Activated CD4-positive, alpha-beta memory T cell treated with anti-CD3 and anti-CD28 coated beads for 36 hours (primary cell): ENCODE measurements at regions of chr1 and their contacts with region 1.

Region 1: DNA sequence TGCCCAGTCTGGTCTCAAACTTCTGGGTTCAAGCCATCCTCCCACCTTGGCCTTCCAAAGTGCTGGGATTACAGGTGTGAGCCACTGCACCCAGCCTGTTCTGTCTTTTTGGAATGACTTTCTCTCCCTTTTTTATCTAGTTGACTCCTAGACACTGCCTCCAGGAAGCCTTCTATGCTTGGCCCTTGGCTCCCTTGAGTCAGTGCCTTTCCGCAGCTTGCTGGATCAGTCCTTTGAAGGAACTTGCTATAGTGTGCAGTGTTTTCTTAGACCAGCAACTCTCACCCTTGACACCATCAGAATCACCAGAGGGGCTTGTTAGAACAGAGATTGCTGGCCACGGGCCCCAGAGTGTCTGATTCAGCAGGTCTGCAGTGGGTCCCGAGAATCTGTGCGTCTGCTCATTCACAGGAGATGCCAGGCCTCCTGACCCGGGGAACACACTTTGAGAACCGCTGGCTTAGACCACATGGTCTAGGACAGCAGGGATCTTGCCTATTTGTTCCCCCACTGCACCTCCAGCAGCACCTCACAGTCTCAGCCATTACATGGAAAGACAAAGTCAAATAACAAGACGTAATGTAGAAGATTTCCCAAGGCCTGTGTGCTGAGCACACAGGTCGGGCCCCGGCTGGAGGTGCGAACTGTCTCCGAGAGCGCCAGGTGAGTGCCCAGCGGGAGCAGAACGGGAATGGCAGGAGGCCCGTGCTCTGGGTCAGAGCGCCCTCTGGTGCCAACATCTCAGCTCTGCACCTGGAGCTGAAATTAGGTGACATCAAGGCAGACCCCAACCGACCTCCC is 27.4 kb upstream of the CTPS1 start:
- DNase-seq: peak; percentile 73
- H3K4me3 Mint-ChIP-seq: no peak overlapping the region
- H3K27ac Mint-ChIP-seq: no peak overlapping the region
- H3K4me1 Mint-ChIP-seq: peaks cover 8% of the 10 kb centered on the region
- H3K27me3 Mint-ChIP-seq: peaks cover 13% of the 10 kb centered on the region

Region 2: GRCh38 chr1:40612345-40612831 is 339.8 kb before region 1 on chr1:
- CTCF ChIA-PET with region 1: interaction called, 4 read pairs
- POLR2A ChIA-PET with region 1: no interaction called
- intact Hi-C with region 1: loop called (anchors 1 kb)
- DNase-seq: peak; percentile 79
- H3K4me3 Mint-ChIP-seq: no peak overlapping the region
- H3K27ac Mint-ChIP-seq: no peak overlapping the region
- H3K4me1 Mint-ChIP-seq: no peaks in the 10 kb centered on the region
- H3K27me3 Mint-ChIP-seq: no peaks in the 10 kb centered on the region

Region 3: GRCh38 chr1:40774266-40774998 is 177.7 kb before region 1 on chr1:
- CTCF ChIA-PET with region 1: interaction called, 123 read pairs
- POLR2A ChIA-PET with region 1: interaction called, 3 read pairs
- intact Hi-C with region 1: loop called (anchors 1 kb)
- DNase-seq: peak; percentile 74
- H3K4me3 Mint-ChIP-seq: no peak overlapping the region
- H3K27ac Mint-ChIP-seq: no peak overlapping the region
- H3K4me1 Mint-ChIP-seq: no peaks in the 10 kb centered on the region
- H3K27me3 Mint-ChIP-seq: no peaks in the 10 kb centered on the region

Region 4: DNA sequence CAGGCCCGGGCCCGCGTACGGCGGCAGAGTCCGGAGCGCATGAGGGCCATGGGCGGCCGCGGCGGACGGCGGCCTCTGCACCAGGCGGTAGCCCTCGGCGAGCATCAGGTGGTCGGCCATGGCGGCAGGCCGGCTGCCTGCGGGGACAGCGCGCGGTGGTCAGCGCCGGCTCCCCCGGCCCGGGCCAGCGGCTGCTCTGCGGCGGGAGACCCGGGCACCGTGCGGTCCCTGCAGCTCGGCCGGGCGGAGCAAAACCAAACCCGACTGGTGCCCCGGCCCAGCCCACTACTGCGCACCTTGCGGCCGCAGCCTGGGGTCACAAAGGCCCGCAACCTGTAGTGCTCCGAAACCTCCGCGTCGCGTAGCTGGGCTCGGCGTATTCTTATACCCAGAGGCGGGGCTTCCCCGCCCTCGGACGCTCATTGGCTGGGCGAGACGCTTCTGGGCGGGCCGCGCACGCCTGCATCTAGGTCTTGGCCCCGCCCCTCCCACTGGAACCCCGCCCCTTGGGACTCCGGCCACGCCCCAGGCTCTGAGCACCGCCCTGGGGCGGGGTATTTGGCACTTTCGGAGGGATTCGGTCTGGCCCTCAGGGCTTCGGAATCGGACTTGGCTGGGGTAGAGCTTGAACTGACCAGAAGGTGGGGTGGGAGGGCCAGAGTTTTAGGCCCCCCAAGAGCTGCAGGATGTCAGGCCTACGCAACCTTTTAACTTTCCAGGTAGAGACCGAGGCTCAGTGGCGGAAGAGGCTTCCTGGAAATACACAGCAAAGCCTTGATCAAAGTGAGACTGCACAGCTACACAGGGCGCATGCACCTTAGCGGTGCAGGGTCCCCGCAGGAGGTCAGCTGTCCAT is 89.9 kb before region 1 on chr1 and contains the start of gene CITED4:
- CTCF ChIA-PET with region 1: interaction called, 47 read pairs
- POLR2A ChIA-PET with region 1: no interaction called
- intact Hi-C with region 1: loop called (anchors 1 kb)
- DNase-seq: peak; percentile 96
- H3K4me3 Mint-ChIP-seq: peak within 1 kb of the TSS; percentile 87
- H3K27ac Mint-ChIP-seq: peak within 1 kb of the TSS; percentile 97
- H3K4me1 Mint-ChIP-seq: peaks cover 10% of the 10 kb centered on the region
- H3K27me3 Mint-ChIP-seq: peaks cover 3% of the 10 kb centered on the region
- total RNA-seq, gene CITED4: 1.9 to 2.1 TPM

Region 5: DNA sequence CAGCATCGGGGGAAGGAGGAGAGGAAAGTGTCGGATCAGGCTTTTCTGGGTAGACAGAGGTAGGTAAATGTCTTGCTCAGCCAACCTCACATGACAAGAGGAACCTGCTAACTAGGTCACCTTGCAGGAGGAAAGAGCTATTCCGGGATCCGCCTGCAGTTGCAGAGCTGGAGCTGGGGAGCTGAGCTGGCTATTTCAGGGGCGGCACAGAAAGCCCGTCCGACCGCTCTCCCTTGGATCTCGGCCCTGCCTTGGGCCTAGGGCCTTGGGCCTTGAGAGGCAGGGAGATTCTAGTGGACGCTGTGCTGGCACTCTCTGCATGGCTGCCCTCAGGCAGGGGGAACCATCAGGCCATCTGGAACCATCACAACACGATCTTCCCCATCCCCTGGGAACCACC is 29.2 kb before region 1 on chr1:
- CTCF ChIA-PET with region 1: interaction called, 26 read pairs
- POLR2A ChIA-PET with region 1: no interaction called
- intact Hi-C with region 1: no loop called
- DNase-seq: no peak
- H3K4me3 Mint-ChIP-seq: no peak overlapping the region
- H3K27ac Mint-ChIP-seq: no peak overlapping the region
- H3K4me1 Mint-ChIP-seq: no peaks in the 10 kb centered on the region
- H3K27me3 Mint-ChIP-seq: peaks cover 3% of the 10 kb centered on the region

Region 6: GRCh38 chr1:41455479-41456332 is 503.6 kb after region 1 on chr1:
- CTCF ChIA-PET with region 1: no interaction called
- POLR2A ChIA-PET with region 1: no interaction called
- intact Hi-C with region 1: no loop called
- DNase-seq: no peak
- H3K4me3 Mint-ChIP-seq: no peak overlapping the region
- H3K27ac Mint-ChIP-seq: no peak overlapping the region
- H3K4me1 Mint-ChIP-seq: no peaks in the 10 kb centered on the region
- H3K27me3 Mint-ChIP-seq: no peaks in the 10 kb centered on the region